Panc1 (cell line): ENCODE measurements at regions of chr18 and their contacts with region 1.

Region 1: GRCh38 chr18:42211201-42211600 is 256.2 kb downstream of the PIK3C3 start:
- DNase-seq: no peak
- ATAC-seq: no peak
- H3K4me3 ChIP-seq: no peak overlapping the region
- H3K27ac ChIP-seq: no peak overlapping the region
- H3K4me1 ChIP-seq: no peaks in the 10 kb centered on the region
- H3K27me3 ChIP-seq: no peaks in the 10 kb centered on the region
- CTCF ChIP-seq: no peak

Region 2: DNA sequence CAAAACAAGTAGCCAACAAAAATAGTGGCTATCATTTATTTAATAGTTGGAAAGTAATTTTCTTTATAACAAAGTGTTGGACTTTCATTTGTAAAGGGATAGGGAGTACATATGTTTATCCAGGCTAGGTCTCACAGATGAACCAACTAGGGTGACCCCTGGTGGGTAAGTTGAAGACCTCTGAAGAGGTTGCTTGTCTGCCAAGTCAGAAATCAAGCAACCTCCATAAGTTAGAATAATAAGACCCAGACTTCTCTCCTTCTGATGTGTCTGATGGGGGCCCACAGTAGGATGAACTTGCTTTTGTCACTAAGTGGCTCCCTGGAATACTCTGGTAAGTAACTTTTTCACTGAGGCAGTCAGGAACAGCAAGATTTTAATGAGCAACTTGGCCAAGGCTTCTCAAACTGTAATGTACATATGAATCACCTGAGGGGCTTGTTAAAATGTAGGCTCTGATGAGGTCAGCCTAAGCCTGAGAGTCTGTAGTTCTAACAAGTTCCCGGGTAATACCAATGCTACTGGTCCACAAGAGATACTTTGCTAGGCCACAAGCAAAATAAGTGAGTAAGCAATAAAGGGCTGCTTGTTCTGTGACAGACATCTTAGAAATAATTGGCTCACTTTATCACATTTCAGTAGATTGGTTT is 63.4 kb after region 1 on chr18:
- CTCF ChIA-PET with region 1: no interaction called
- POLR2A ChIA-PET with region 1: no interaction called
- in situ Hi-C with region 1: no loop called
- intact Hi-C with region 1: loop called (anchors 10 kb)
- DNase-seq: no peak
- ATAC-seq: no peak
- H3K4me3 ChIP-seq: no peak overlapping the region
- H3K27ac ChIP-seq: no peak overlapping the region
- H3K4me1 ChIP-seq: no peaks in the 10 kb centered on the region
- H3K27me3 ChIP-seq: no peaks in the 10 kb centered on the region
- CTCF ChIP-seq: no peak